Heart left ventricle (tissue), 16 donors: ENCODE measurements at regions of chr5 and their contacts with region 1.

Region 1: DNA sequence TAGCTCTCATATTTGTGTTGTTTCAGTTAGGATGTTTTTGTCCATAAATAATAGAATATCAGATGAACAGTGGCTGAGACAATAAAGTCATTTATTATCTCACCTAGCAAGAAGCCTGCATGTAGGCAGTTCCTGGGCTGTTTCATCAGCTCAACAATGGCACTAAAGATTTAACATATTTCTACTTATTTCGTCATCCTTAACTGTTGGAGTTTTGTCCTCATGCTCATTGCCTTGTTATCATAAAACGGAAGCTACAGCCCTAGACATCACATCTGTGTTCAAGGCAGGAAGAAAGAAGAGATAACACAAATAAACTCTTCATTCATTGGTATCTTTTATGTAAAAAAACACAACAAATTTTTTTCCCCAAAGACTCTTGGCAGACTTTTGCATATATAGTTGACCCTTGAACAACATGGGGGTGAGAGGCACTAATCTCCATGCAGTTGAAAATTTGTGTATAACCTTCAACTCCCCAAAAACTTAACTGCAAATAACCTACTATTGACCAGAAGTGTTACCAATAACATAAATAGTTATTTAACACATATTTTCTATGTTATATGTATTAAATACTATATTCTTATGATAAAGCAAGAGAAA is 277.2 kb upstream of the ADRA1B start:
- DNase-seq: no peak
- ATAC-seq: no peak
- H3K4me3 ChIP-seq: no peak overlapping the region
- H3K27ac ChIP-seq: no peak overlapping the region
- H3K4me1 ChIP-seq: peaks cover 0 to 13% (median 0%) of the 10 kb centered on the region in 12 donors
- H3K27me3 ChIP-seq: no peaks in the 10 kb centered on the region
- CTCF ChIP-seq: no peak
- POLR2A ChIP-seq: no peak

Region 2: GRCh38 chr5:159605585-159605984 is 33.5 kb before region 1 on chr5:
- intact Hi-C with region 1: loop called in 2 of 10 experiments (anchors 5 kb)
- DNase-seq: peak in 4 of 5 donors; percentile 54 to 75 (median 70)
- ATAC-seq: peak; percentile 97 to 98 (median 98)
- H3K4me3 ChIP-seq: no peak overlapping the region
- H3K27ac ChIP-seq: peak overlapping the region in 11 of 12 donors; percentile 6 to 80 (median 47)
- H3K4me1 ChIP-seq: peaks cover 0 to 20% (median 7%) of the 10 kb centered on the region in 12 donors
- H3K27me3 ChIP-seq: no peaks in the 10 kb centered on the region
- CTCF ChIP-seq: no peak
- POLR2A ChIP-seq: no peak

Region 3: GRCh38 chr5:159673538-159673937 is 34.5 kb after region 1 on chr5:
- intact Hi-C with region 1: loop called in 1 of 10 experiments (anchors 1 kb)
- DNase-seq: no peak
- ATAC-seq: no peak
- H3K4me3 ChIP-seq: no peak overlapping the region
- H3K27ac ChIP-seq: no peak overlapping the region
- H3K4me1 ChIP-seq: no peaks in the 10 kb centered on the region
- H3K27me3 ChIP-seq: no peaks in the 10 kb centered on the region
- CTCF ChIP-seq: no peak
- POLR2A ChIP-seq: no peak